ENCODE measurements at regions of chr4 and their contacts with region 1.

Region 1: DNA sequence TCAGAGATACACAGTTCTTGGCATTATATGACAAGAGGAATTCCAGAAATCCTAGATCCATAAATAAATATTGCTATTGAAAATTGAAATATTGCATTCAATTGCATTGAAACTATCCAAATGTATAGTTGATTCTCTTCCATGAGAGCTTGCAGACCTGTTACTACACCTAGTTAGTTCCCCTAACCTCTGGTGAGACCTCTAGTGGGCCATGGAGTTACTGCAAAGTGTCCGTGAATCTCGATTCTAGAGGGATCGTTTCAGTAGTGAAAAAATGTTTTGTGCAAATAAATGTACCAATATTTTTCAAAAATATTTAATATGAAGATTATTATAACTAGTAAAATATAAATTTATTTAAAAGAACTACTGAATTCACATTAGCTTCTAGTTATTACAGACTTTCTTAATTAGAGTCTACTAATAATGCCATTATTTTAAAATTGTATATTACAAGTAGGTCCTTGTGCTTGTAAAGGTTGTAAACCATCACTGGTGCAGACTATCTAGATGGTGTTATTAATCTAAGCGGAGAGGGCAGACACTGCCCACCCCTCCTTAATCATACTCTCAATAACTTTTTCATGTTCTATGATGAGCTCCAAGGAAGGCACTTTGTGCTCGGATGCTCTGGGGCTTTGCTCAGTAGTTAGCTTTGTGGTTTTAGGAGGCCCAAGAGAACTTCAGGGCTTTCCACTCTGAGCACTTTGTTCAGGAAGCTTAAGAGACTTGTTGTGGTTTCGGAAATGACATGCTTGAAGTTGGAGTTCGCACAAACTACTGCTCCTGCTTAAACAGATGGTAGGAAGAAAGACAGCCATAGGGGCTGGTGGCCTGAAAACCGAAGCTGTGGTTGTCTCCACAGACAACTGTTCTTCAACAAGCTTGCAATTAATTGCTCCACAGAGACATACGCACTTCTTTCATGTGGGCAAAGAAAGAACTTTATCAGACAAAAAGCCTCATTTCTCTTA is 42.8 kb downstream of the IL21 start:
- DNase-seq: peak; percentile 22 to 88 (median 67)
- ATAC-seq: peak; percentile 83 to 89 (median 84)
- H3K4me3 ChIP-seq: peak overlapping the region; percentile 18 to 23
- H3K4me3 Mint-ChIP-seq: peak overlapping the region; percentile 20 to 67 (median 62)
- H3K27ac ChIP-seq: peak overlapping the region; percentile 42
- H3K27ac Mint-ChIP-seq: peak overlapping the region; percentile 88 to 93
- H3K4me1 ChIP-seq: peaks cover 22 to 43% of the 10 kb centered on the region in 2 experiments
- H3K4me1 Mint-ChIP-seq: peaks cover 30 to 45% (median 41%) of the 10 kb centered on the region in 3 donors
- H3K27me3 ChIP-seq: peaks cover 0 to 3% of the 10 kb centered on the region in 2 experiments
- H3K27me3 Mint-ChIP-seq: no peaks in the 10 kb centered on the region

Region 2: GRCh38 chr4:121900132-121900983 is 677.7 kb before region 1 on chr4:
- CTCF ChIA-PET with region 1: interaction called in 1 of 2 experiments, 39 read pairs
- POLR2A ChIA-PET with region 1: no interaction called
- DNase-seq: peak in 32 of 35 experiments; percentile 7 to 76 (median 34)
- ATAC-seq: peak; percentile 75 to 87 (median 79)
- H3K4me3 ChIP-seq: no peak overlapping the region
- H3K4me3 Mint-ChIP-seq: no peak overlapping the region
- H3K27ac ChIP-seq: no peak overlapping the region
- H3K27ac Mint-ChIP-seq: peak overlapping the region in 1 of 2 donors; percentile 76
- H3K4me1 ChIP-seq: peaks cover 0 to 2% of the 10 kb centered on the region in 2 experiments
- H3K4me1 Mint-ChIP-seq: peaks cover 6 to 13% (median 9%) of the 10 kb centered on the region in 3 donors
- H3K27me3 ChIP-seq: no peaks in the 10 kb centered on the region
- H3K27me3 Mint-ChIP-seq: peaks cover 0 to 12% of the 10 kb centered on the region in 2 donors

Region 3: DNA sequence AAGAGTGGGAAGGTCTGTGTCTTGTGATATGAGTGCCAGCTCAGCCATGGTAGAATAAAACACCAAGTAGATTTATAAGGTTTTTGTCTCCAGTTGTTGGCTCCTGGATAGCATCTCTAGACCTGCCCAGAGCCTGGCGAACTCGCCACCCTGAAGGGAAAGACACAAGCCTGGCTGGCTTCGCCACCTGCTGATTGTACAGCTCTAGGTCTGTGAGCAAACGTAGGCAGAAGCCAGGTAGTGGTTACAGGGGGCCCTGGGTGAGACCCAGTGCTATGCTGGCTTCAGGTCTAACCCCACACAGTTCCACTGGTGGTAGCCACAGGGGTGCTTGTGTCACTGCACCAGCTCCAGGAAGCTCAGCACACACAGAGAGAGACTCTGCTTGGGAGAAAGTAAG is 325.5 kb before region 1 on chr4:
- CTCF ChIA-PET with region 1: no interaction called
- POLR2A ChIA-PET with region 1: no interaction called
- DNase-seq: no peak
- ATAC-seq: no peak
- H3K4me3 ChIP-seq: no peak overlapping the region
- H3K4me3 Mint-ChIP-seq: no peak overlapping the region
- H3K27ac ChIP-seq: no peak overlapping the region
- H3K27ac Mint-ChIP-seq: no peak overlapping the region
- H3K4me1 ChIP-seq: no peaks in the 10 kb centered on the region
- H3K4me1 Mint-ChIP-seq: no peaks in the 10 kb centered on the region
- H3K27me3 ChIP-seq: no peaks in the 10 kb centered on the region
- H3K27me3 Mint-ChIP-seq: no peaks in the 10 kb centered on the region

Region 4: DNA sequence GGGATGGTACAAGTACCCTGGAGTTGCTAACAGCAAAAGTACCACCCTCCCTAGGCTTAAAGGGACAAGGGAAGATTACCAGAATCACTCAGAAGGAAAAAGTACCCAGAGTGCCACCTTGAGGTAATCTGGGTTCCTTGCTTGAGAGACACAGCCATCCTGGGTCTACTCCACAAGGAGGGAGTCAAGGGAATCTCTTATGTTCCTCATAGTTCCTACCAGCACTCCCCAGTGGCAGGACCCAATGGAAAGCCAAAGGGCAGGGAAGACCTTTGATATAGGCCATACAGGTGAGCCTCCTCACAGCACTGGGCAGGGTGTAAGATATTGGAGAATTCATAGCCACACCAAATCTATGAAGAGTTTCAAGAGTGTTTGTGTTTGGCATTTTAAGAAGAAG is 127.2 kb before region 1 on chr4:
- CTCF ChIA-PET with region 1: interaction called in 1 of 2 experiments, 4 read pairs
- POLR2A ChIA-PET with region 1: interaction called in 1 of 2 experiments, 13 read pairs
- DNase-seq: peak in 1 of 35 experiments; percentile 34
- ATAC-seq: peak in 2 of 4 experiments; percentile 30 to 50
- H3K4me3 ChIP-seq: no peak overlapping the region
- H3K4me3 Mint-ChIP-seq: no peak overlapping the region
- H3K27ac ChIP-seq: no peak overlapping the region
- H3K27ac Mint-ChIP-seq: no peak overlapping the region
- H3K4me1 ChIP-seq: peaks cover 0 to 12% of the 10 kb centered on the region in 2 experiments
- H3K4me1 Mint-ChIP-seq: peaks cover 24 to 26% (median 25%) of the 10 kb centered on the region in 3 donors
- H3K27me3 ChIP-seq: no peaks in the 10 kb centered on the region
- H3K27me3 Mint-ChIP-seq: no peaks in the 10 kb centered on the region

Region 5: GRCh38 chr4:122602277-122603142 is 24.4 kb after region 1 on chr4:
- CTCF ChIA-PET with region 1: interaction called, 6 to 13 read pairs
- POLR2A ChIA-PET with region 1: no interaction called
- DNase-seq: peak in 1 of 35 experiments; percentile 56
- ATAC-seq: peak in 3 of 4 experiments; percentile 35 to 68 (median 41)
- H3K4me3 ChIP-seq: no peak overlapping the region
- H3K4me3 Mint-ChIP-seq: peak overlapping the region in 1 of 3 donors; percentile 0
- H3K27ac ChIP-seq: no peak overlapping the region
- H3K27ac Mint-ChIP-seq: no peak overlapping the region
- H3K4me1 ChIP-seq: peaks cover 0 to 3% of the 10 kb centered on the region in 2 experiments
- H3K4me1 Mint-ChIP-seq: peaks cover 0 to 6% (median 4%) of the 10 kb centered on the region in 3 donors
- H3K27me3 ChIP-seq: peaks cover 0 to 2% of the 10 kb centered on the region in 2 experiments
- H3K27me3 Mint-ChIP-seq: peaks cover 7 to 16% of the 10 kb centered on the region in 2 donors

Region 6: DNA sequence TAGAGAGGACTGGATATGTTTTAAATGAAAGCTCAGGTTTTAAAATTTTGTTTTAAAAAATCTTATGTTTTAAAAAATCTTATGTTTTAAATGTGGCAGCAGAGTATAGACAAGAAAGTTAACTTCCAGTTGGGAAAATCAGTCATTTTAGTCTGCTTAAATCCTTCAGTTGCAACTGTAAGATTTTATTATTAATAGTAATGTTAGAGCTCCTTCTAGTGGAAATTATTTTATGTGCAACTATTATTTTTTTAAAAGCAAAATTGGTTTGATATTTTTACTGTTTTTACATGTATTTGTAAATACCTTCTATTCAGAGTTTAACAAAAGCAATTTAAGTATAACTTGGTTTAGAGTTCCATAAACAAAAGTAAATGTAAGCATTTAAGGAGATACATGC is 352.8 kb after region 1 on chr4:
- CTCF ChIA-PET with region 1: interaction called in 1 of 2 experiments, 19 read pairs
- POLR2A ChIA-PET with region 1: no interaction called
- DNase-seq: peak in 1 of 35 experiments; percentile 33
- ATAC-seq: no peak
- H3K4me3 ChIP-seq: no peak overlapping the region
- H3K4me3 Mint-ChIP-seq: no peak overlapping the region
- H3K27ac ChIP-seq: no peak overlapping the region
- H3K27ac Mint-ChIP-seq: no peak overlapping the region
- H3K4me1 ChIP-seq: no peaks in the 10 kb centered on the region
- H3K4me1 Mint-ChIP-seq: peaks cover 0 to 8% (median 7%) of the 10 kb centered on the region in 3 donors
- H3K27me3 ChIP-seq: no peaks in the 10 kb centered on the region
- H3K27me3 Mint-ChIP-seq: no peaks in the 10 kb centered on the region

Region 7: GRCh38 chr4:123064390-123064789 is 486.3 kb after region 1 on chr4:
- CTCF ChIA-PET with region 1: no interaction called
- POLR2A ChIA-PET with region 1: no interaction called
- DNase-seq: no peak
- ATAC-seq: no peak
- H3K4me3 ChIP-seq: no peak overlapping the region
- H3K4me3 Mint-ChIP-seq: no peak overlapping the region
- H3K27ac ChIP-seq: no peak overlapping the region
- H3K27ac Mint-ChIP-seq: no peak overlapping the region
- H3K4me1 ChIP-seq: no peaks in the 10 kb centered on the region
- H3K4me1 Mint-ChIP-seq: no peaks in the 10 kb centered on the region
- H3K27me3 ChIP-seq: no peaks in the 10 kb centered on the region
- H3K27me3 Mint-ChIP-seq: no peaks in the 10 kb centered on the region